Cardiac septum (tissue), 1 donor: ENCODE measurements at regions of chr1 and their contacts with region 1.

Region 1: GRCh38 chr1:57061369-57061768 is 95.6 kb upstream of the C8B start:
- DNase-seq: no peak

Region 2: GRCh38 chr1:57131701-57132394 is 70.5 kb after region 1 on chr1:
- intact Hi-C with region 1: loop called (anchors 2 kb)
- DNase-seq: no peak

Region 3: GRCh38 chr1:57321776-57322175 is 260.4 kb after region 1 on chr1:
- intact Hi-C with region 1: loop called (anchors 10 kb)
- DNase-seq: no peak